ENCODE measurements at regions of chr7 and their contacts with region 1.

Region 1: GRCh38 chr7:6272481-6273323 is at the start of gene CYTH3:
- DNase-seq: peak; percentile 91
- ATAC-seq: peak; percentile 95
- total RNA-seq, gene CYTH3: 30.3 TPM

Region 2: DNA sequence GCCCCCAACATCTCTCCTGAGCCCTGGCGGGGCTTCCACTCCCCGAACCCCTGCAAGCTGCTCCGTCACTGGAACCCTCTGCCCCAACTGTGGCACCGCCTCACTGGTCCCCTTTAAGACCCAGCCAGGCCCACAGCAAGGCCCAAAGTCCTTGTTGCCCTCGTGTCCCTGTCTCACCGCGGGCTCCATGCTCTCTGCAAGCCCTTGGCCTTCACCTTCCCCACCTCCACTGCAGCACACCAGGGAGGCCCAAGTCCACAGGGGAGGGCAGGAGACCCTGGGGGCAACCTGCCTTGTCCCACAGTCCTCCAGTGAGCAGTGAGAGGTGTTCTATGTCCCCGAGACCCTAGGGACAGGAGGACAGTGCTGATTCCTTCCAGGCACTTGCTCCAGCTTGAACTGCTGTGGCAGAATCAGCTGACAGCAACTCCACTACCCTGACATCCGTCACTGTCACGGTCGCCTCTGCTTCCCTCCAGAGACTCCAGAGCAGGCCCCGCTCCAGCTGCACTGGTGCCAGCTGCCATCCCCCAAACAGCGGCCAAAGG is 105.6 kb before region 1 on chr7:
- intact Hi-C with region 1: loop called (anchors 2 kb)
- DNase-seq: no peak
- ATAC-seq: peak; percentile 67

Region 3: GRCh38 chr7:6317797-6318438 is 45.2 kb after region 1 on chr7:
- intact Hi-C with region 1: loop called (anchors 5 kb)
- DNase-seq: peak; percentile 80
- ATAC-seq: peak; percentile 93

Region 4: DNA sequence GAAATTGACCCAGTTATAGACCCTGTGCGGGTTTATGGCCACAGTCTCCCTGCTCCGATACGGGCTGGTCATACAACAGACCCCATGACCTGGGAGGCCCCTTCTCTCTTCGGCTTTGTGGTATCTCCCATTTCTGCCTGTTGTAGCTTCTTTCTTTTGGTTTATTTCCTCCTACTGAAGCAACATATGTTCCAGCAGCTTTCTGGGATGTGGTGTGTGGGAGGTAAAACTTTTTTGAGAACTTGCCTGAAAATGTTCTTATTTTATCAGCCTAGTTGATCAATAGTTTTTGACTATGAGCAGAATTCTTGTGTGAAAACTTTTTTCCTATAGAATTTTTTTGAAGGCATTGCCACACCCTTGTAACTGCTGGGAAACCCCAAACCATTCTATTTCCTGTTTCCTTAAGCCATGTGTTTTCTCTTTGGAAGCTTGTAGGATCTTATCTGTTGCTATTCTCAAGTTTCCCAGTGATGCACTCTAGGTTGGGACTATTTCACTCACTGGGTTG is 95.1 kb after region 1 on chr7:
- intact Hi-C with region 1: no loop called
- DNase-seq: no peak
- ATAC-seq: no peak

Measured in Right ventricle myocardium inferior (tissue), 1 donor.